ENCODE measurements at regions of chr18 and their contacts with region 1.

Region 1: GRCh38 chr18:9737472-9738121 is 29.5 kb downstream of the RAB31 start:
- DNase-seq: peak; percentile 85
- ATAC-seq: peak; percentile 58
- H3K4me3 ChIP-seq: peak overlapping the region; percentile 43
- H3K27ac ChIP-seq: peak overlapping the region; percentile 83
- H3K4me1 ChIP-seq: peaks cover 60% of the 10 kb centered on the region
- H3K27me3 ChIP-seq: no peaks in the 10 kb centered on the region
- CTCF ChIP-seq: no peak

Region 2: GRCh38 chr18:9705158-9705864 is 32.3 kb before region 1 on chr18:
- CTCF ChIA-PET with region 1: no interaction called
- POLR2A ChIA-PET with region 1: no interaction called
- intact Hi-C with region 1: loop called (anchors 1 kb)
- DNase-seq: peak; percentile 68
- ATAC-seq: peak; percentile 89
- H3K4me3 ChIP-seq: no peak overlapping the region
- H3K27ac ChIP-seq: peak overlapping the region; percentile 42
- H3K4me1 ChIP-seq: peaks cover 19% of the 10 kb centered on the region
- H3K27me3 ChIP-seq: no peaks in the 10 kb centered on the region
- CTCF ChIP-seq: no peak

Region 3: DNA sequence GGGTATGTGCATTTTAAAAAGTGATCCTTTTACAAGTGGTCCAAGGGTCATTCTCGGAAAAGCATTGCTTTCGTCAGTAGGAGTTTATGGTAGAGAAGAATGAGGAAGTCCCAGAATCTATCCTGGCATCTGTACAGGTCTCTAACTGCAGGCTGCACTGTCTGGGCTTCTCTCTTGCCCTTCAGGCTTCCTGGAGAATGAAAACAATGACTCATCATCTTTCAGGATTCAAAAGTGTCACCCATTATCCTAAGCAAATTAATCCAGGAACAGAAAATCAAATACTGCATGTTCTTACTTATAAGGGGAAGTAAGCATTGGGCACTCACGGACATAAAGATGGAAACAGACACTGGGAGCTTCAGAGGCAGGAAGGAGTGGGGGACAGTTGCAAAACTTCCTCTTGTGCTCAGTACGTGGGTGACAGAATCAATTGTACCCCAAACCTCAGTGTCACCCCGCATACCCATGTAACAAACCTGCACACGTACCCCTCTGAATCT is 88.0 kb after region 1 on chr18:
- CTCF ChIA-PET with region 1: no interaction called
- POLR2A ChIA-PET with region 1: no interaction called
- intact Hi-C with region 1: loop called (anchors 2 kb)
- DNase-seq: peak; percentile 95
- ATAC-seq: peak; percentile 81
- H3K4me3 ChIP-seq: peak overlapping the region; percentile 16; the same call in 1 of the 2 replicates
- H3K27ac ChIP-seq: peak overlapping the region; percentile 70
- H3K4me1 ChIP-seq: peaks cover 49% of the 10 kb centered on the region
- H3K27me3 ChIP-seq: no peaks in the 10 kb centered on the region
- CTCF ChIP-seq: no peak

Region 4: DNA sequence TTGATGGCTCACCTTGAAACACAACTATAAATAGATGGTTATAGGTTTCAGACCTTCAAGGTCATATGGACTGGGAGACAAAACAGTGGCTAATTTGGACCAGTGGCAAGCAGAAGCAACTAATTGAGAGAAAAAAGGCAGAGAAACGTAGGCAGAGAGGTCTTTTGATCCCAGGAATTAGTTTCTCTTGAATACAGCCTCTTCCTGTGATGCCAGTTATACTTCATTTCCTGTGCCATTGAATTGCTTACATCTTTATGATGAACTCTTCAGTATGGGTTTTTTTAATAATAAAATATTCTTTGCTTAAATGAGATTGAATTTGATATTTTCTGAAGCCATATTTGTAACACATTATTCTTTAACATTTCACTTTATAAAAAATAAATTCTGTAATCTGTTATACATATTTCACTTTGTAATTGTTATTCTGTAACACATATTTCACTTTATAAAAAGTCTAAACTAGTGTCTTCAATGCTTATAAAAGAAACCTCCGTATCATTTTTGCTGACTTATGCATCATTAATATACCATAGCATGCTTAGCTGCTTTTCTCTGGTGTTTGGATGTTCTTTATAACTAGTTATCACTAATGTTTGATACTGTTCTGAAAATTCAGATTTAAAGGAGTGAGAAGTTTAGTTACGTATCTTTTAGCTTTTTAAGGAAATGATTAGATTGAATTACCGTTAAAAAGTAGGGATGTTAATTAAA is 185.2 kb after region 1 on chr18:
- CTCF ChIA-PET with region 1: no interaction called
- POLR2A ChIA-PET with region 1: no interaction called
- intact Hi-C with region 1: no loop called
- DNase-seq: no peak
- ATAC-seq: no peak
- H3K4me3 ChIP-seq: no peak overlapping the region
- H3K27ac ChIP-seq: no peak overlapping the region
- H3K4me1 ChIP-seq: peaks cover 21% of the 10 kb centered on the region
- H3K27me3 ChIP-seq: no peaks in the 10 kb centered on the region
- CTCF ChIP-seq: no peak

Region 5: GRCh38 chr18:10525371-10526210 is 788.0 kb after region 1 on chr18 and contains the start of gene NAPG:
- CTCF ChIA-PET with region 1: no interaction called
- POLR2A ChIA-PET with region 1: no interaction called
- intact Hi-C with region 1: loop called (anchors 10 kb)
- DNase-seq: peak; percentile 93
- ATAC-seq: peak; percentile 82
- H3K4me3 ChIP-seq: peak within 1 kb of the TSS; percentile 98
- H3K27ac ChIP-seq: peak within 1 kb of the TSS; percentile 37
- H3K4me1 ChIP-seq: peaks cover 23% of the 10 kb centered on the region
- H3K27me3 ChIP-seq: 0 out of 2 replicates have a peak, but pooled peaks cover 3% of the 10 kb centered on the region
- CTCF ChIP-seq: no peak
- total RNA-seq, gene NAPG: 24.0 and 24.7 TPM in 2 replicates